Activated naive CD4-positive, alpha-beta T cell treated with anti-CD3 and anti-CD28 coated beads for 36 hours (primary cell): ENCODE measurements at regions of chr6 and their contacts with region 1.

Region 1: GRCh38 chr6:34671801-34672656 is 24.5 kb downstream of the ILRUN start:
- DNase-seq: peak; percentile 88
- H3K4me3 Mint-ChIP-seq: peak overlapping the region; percentile 70
- H3K27ac Mint-ChIP-seq: peak overlapping the region; percentile 94
- H3K4me1 Mint-ChIP-seq: peaks cover 54% of the 10 kb centered on the region
- H3K27me3 Mint-ChIP-seq: no peaks in the 10 kb centered on the region

Region 2: GRCh38 chr6:34513646-34514045 is 158.4 kb before region 1 on chr6:
- CTCF ChIA-PET with region 1: no interaction called
- intact Hi-C with region 1: no loop called
- DNase-seq: no peak
- H3K4me3 Mint-ChIP-seq: no peak overlapping the region
- H3K27ac Mint-ChIP-seq: no peak overlapping the region
- H3K4me1 Mint-ChIP-seq: no peaks in the 10 kb centered on the region
- H3K27me3 Mint-ChIP-seq: no peaks in the 10 kb centered on the region

Region 3: GRCh38 chr6:34656378-34657036 is 15.5 kb before region 1 on chr6:
- CTCF ChIA-PET with region 1: interaction called, 6 read pairs
- intact Hi-C with region 1: loop called (anchors 1 kb)
- DNase-seq: peak; percentile 66
- H3K4me3 Mint-ChIP-seq: peak overlapping the region; percentile 61
- H3K27ac Mint-ChIP-seq: peak overlapping the region; percentile 89
- H3K4me1 Mint-ChIP-seq: peaks cover 44% of the 10 kb centered on the region
- H3K27me3 Mint-ChIP-seq: no peaks in the 10 kb centered on the region

Region 4: GRCh38 chr6:34696739-34697543 is 24.9 kb after region 1 on chr6 and contains the start of gene ILRUN:
- CTCF ChIA-PET with region 1: interaction called, 3 read pairs
- intact Hi-C with region 1: loop called (anchors 1 kb)
- DNase-seq: peak; percentile 98
- H3K4me3 Mint-ChIP-seq: peak within 1 kb of the TSS; percentile 100
- H3K27ac Mint-ChIP-seq: peak within 1 kb of the TSS; percentile 99
- H3K4me1 Mint-ChIP-seq: peaks cover 44% of the 10 kb centered on the region
- H3K27me3 Mint-ChIP-seq: no peaks in the 10 kb centered on the region
- total RNA-seq, gene ILRUN: 51.4 to 53.3 TPM

Region 5: DNA sequence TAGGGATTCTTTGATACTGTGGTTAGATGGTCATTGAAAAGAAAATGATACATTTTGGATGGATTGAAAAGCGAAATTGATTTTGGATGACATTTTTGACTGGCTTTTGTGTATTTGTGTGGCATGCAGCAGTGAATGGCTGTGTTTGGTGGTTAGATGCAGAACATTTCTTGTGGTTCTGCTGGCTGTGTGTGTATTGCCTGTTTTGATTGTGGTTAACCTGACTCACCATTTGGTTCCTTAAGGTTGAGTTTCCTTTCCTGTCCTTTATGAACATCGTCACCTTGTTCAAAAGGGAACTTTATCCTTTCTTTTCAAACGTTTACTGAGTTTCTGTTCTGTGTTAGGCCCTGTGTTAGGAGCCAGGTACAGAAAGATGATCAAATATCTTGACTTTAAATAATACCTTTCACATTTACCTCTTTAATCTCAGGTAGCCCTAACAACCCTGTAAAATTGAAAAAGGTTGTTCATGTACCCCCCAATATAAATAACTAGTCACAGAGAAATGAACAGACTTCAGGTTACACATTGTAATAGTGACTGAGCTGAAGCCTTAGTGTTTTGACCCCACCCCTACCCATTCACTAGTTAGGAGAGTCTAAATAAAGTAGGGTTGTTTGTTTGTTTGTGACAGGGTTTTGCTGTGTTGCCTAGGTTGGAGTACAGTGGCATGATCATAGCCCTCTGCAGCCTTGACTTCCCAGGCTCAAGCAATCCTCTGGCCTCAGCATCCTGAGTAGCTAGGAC is 240.9 kb after region 1 on chr6:
- CTCF ChIA-PET with region 1: no interaction called
- intact Hi-C with region 1: loop called (anchors 1 kb)
- DNase-seq: peak; percentile 67
- H3K4me3 Mint-ChIP-seq: no peak overlapping the region
- H3K27ac Mint-ChIP-seq: peak overlapping the region; percentile 65
- H3K4me1 Mint-ChIP-seq: peaks cover 28% of the 10 kb centered on the region
- H3K27me3 Mint-ChIP-seq: no peaks in the 10 kb centered on the region